PC-9 (cell line): ENCODE measurements at regions of chr3 and their contacts with region 1.

Region 1: GRCh38 chr3:152328841-152329240 is 60.1 kb downstream of the MBNL1 start:
- DNase-seq: peak in 1 of 2 experiments; percentile 91
- H3K4me3 ChIP-seq: peak overlapping the region; percentile 28
- H3K27ac ChIP-seq: peak overlapping the region; percentile 88
- H3K4me1 ChIP-seq: peaks cover 52% of the 10 kb centered on the region
- H3K27me3 ChIP-seq: no peaks in the 10 kb centered on the region
- CTCF ChIP-seq: no peak

Region 2: GRCh38 chr3:152296971-152297370 is 31.9 kb before region 1 on chr3:
- CTCF ChIA-PET with region 1: no interaction called
- POLR2A ChIA-PET with region 1: interaction called, 13 read pairs
- intact Hi-C with region 1: no loop called
- DNase-seq: no peak
- H3K4me3 ChIP-seq: no peak overlapping the region
- H3K27ac ChIP-seq: no peak overlapping the region
- H3K4me1 ChIP-seq: peaks cover 14% of the 10 kb centered on the region; the same call in 1 of the 2 replicates
- H3K27me3 ChIP-seq: no peaks in the 10 kb centered on the region
- CTCF ChIP-seq: no peak

Region 3: DNA sequence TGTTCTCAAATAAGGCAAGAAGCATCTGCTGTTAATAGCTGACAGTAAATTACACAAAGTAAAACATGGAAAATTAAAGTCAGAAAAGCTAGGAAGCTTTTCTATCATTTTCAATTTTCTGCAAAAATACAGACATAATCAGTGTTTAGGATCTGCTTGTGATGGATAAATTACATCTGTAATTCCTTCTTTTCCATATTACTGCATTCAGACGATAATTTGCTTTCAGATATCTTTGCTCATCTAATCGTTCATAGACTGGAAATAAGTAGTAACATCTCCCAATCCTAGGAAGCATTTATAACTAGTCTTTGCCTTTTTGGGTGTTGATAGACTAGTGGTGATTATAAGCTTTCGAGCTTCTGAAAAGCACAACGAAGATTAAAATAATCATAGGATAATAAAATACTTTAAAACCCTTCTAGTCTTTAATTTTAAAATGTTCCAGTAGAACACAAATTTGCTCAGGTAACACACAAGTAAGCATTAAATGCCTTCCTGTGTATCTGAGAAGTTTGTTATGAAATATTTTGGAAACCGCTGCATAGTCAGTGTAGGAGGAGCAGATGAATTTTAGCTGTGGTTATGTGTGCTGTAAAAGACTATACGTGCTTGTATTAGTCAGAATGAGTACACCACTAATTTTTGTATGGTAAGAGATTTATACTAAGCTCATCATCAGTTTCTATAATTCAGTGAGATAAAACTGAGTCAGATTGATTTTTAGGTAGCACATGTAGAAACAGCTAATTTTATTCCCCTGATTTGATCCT is 19.1 kb before region 1 on chr3:
- CTCF ChIA-PET with region 1: interaction called, 6 read pairs
- POLR2A ChIA-PET with region 1: interaction called, 4 read pairs
- intact Hi-C with region 1: loop called (anchors 2 kb)
- DNase-seq: no peak
- H3K4me3 ChIP-seq: no peak overlapping the region
- H3K27ac ChIP-seq: no peak overlapping the region
- H3K4me1 ChIP-seq: peaks cover 36% of the 10 kb centered on the region
- H3K27me3 ChIP-seq: no peaks in the 10 kb centered on the region
- CTCF ChIP-seq: no peak

Region 4: DNA sequence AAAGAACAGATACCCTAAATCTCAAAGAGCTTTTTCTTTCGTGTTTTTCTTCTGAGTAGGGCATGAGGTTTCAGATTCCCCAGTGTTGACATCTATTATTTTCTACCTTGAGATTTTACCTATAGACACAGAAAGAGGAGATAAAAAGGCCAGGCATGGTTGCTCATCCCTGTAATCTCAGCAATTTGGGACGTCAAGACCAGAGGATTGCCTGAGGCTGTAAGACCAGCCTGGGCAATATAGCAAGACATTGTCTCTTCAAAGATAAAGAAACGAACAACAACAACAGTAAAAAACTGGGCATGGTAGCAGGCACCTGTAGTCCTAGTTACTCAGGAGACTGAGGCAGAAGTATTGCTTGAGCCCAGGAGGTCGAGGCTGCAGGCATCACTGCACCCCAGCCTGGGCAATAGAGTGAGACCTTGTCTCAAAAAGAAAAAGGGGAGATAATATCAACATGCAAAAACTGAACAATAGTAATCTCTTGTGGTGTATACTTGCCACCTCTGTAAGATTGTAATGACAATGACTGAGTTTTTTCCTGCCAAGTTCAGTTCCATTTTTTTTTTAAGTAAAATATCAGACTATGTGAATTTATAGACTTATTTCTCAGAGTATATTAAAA is 11.2 kb after region 1 on chr3:
- CTCF ChIA-PET with region 1: no interaction called
- POLR2A ChIA-PET with region 1: interaction called, 17 read pairs
- intact Hi-C with region 1: no loop called
- DNase-seq: no peak
- H3K4me3 ChIP-seq: no peak overlapping the region
- H3K27ac ChIP-seq: no peak overlapping the region
- H3K4me1 ChIP-seq: no peaks in the 10 kb centered on the region
- H3K27me3 ChIP-seq: no peaks in the 10 kb centered on the region
- CTCF ChIP-seq: no peak

Region 5: DNA sequence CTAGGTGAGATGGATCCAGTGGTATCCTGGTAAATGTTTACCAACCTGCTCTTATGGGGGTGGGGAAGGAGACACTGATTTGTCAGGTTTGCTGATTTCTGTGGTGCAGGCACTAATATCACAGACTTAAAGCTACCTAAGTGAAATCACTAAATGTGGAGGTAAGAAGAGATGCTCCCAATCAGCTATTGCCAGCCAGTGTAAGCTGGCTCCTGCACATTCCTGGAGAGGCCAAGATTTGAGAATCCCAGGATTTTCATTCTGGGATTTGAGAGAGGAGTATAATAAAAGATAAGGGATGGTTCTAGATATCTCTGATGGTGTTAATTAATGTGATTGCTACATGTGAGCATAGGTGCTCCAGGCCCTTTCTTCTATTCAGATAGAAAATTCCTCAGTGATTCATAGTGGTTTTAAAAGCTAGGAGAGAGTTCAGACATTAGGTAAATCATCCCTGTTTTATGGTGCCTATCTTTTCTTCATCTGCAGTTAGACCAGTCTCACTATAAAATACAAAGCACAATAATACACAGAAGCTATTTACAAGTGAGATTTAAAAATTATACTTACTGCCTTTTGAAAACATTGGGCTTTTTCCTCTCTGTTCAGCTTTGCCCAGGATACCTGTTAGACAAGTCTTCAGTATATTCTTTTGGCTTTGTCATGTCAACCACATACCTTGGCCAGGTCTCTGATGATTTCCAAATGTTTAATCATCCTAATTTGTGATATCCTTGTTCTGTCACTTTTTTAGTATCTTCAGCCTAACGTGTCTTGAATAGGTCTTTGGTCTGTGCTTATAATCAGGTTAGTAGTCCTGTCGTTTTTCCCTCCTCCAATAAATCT is 30.8 kb after region 1 on chr3:
- CTCF ChIA-PET with region 1: no interaction called
- POLR2A ChIA-PET with region 1: interaction called, 11 read pairs
- intact Hi-C with region 1: no loop called
- DNase-seq: peak; percentile 3 to 73
- H3K4me3 ChIP-seq: no peak overlapping the region
- H3K27ac ChIP-seq: peak overlapping the region; percentile 46
- H3K4me1 ChIP-seq: peaks cover 30% of the 10 kb centered on the region
- H3K27me3 ChIP-seq: no peaks in the 10 kb centered on the region
- CTCF ChIP-seq: no peak

Region 6: DNA sequence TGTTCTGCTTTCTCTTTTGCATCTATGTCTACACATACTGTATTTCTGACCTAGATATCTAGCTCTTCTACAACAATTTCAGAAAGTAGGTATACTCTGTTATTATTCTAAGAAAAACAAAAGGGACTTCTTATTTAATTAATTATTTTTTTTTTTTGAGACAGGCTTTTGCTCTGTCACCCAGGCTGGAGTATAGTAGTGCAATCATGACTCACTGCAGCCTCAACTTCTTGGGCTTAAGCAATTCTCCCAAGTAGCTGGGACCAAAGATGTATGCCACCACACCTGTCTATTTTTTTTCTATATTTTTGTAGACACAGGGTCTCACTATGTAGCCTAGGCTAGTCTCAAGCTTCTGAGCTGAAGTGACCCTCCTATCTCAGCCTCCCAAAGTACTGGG is 70.5 kb after region 1 on chr3:
- CTCF ChIA-PET with region 1: no interaction called
- POLR2A ChIA-PET with region 1: no interaction called
- intact Hi-C with region 1: loop called (anchors 5 kb)
- DNase-seq: peak in 1 of 2 experiments; percentile 44
- H3K4me3 ChIP-seq: no peak overlapping the region
- H3K27ac ChIP-seq: peak overlapping the region; percentile 60
- H3K4me1 ChIP-seq: peaks cover 15% of the 10 kb centered on the region
- H3K27me3 ChIP-seq: no peaks in the 10 kb centered on the region
- CTCF ChIP-seq: no peak

Region 7: GRCh38 chr3:152444029-152444641 is 115.3 kb after region 1 on chr3:
- CTCF ChIA-PET with region 1: no interaction called
- POLR2A ChIA-PET with region 1: no interaction called
- intact Hi-C with region 1: loop called (anchors 10 kb)
- DNase-seq: peak in 1 of 2 experiments; percentile 63
- H3K4me3 ChIP-seq: no peak overlapping the region
- H3K27ac ChIP-seq: peak overlapping the region; percentile 10; the same call in 1 of the 2 replicates
- H3K4me1 ChIP-seq: no peaks in the 10 kb centered on the region
- H3K27me3 ChIP-seq: no peaks in the 10 kb centered on the region
- CTCF ChIP-seq: peak; percentile 87

Region 8: GRCh38 chr3:152688313-152688712 is 359.5 kb after region 1 on chr3:
- CTCF ChIA-PET with region 1: no interaction called
- POLR2A ChIA-PET with region 1: no interaction called
- intact Hi-C with region 1: no loop called
- DNase-seq: no peak
- H3K4me3 ChIP-seq: no peak overlapping the region
- H3K27ac ChIP-seq: no peak overlapping the region
- H3K4me1 ChIP-seq: no peaks in the 10 kb centered on the region
- H3K27me3 ChIP-seq: no peaks in the 10 kb centered on the region
- CTCF ChIP-seq: no peak